B cell (primary cell): ENCODE measurements at regions of chr7 and their contacts with region 1.

Region 1: GRCh38 chr7:5206686-5207085 is 16.7 kb downstream of the WIPI2 start:
- DNase-seq: no peak
- ATAC-seq: no peak
- H3K4me3 ChIP-seq: no peak overlapping the region
- H3K4me3 Mint-ChIP-seq: no peak overlapping the region
- H3K27ac ChIP-seq: no peak overlapping the region
- H3K27ac Mint-ChIP-seq: no peak overlapping the region
- H3K4me1 ChIP-seq: no peaks in the 10 kb centered on the region
- H3K4me1 Mint-ChIP-seq: peaks cover 32% of the 10 kb centered on the region
- H3K27me3 ChIP-seq: no peaks in the 10 kb centered on the region
- H3K27me3 Mint-ChIP-seq: no peaks in the 10 kb centered on the region
- CTCF ChIP-seq: no peak

Region 2: GRCh38 chr7:5243261-5243660 is 36.6 kb after region 1 on chr7:
- CTCF ChIA-PET with region 1: interaction called, 5 read pairs
- POLR2A ChIA-PET with region 1: no interaction called
- intact Hi-C with region 1: loop called (anchors 5 kb)
- DNase-seq: no peak
- ATAC-seq: no peak
- H3K4me3 ChIP-seq: no peak overlapping the region
- H3K4me3 Mint-ChIP-seq: no peak overlapping the region
- H3K27ac ChIP-seq: no peak overlapping the region
- H3K27ac Mint-ChIP-seq: no peak overlapping the region
- H3K4me1 ChIP-seq: peaks cover 14 to 16% of the 10 kb centered on the region in 2 donors
- H3K4me1 Mint-ChIP-seq: peaks cover 14% of the 10 kb centered on the region
- H3K27me3 ChIP-seq: peaks cover 0 to 8% (median 3%) of the 10 kb centered on the region in 4 experiments
- H3K27me3 Mint-ChIP-seq: no peaks in the 10 kb centered on the region
- CTCF ChIP-seq: no peak